ENCODE measurements at regions of chr1 and their contacts with region 1.

Region 1: GRCh38 chr1:22416555-22417454 is 34.8 kb upstream of the ZBTB40 start:
- DNase-seq: peak; percentile 59 to 69
- ATAC-seq: peak in 7 of 8 donors; percentile 46 to 72 (median 51)
- H3K4me3 ChIP-seq: no peak overlapping the region
- H3K27ac ChIP-seq: no peak overlapping the region
- H3K4me1 ChIP-seq: peaks cover 0 to 48% (median 8%) of the 10 kb centered on the region in 9 donors
- H3K27me3 ChIP-seq: peaks cover 0 to 43% (median 18%) of the 10 kb centered on the region in 7 donors
- CTCF ChIP-seq: peak; percentile 43 to 89 (median 79)

Region 2: GRCh38 chr1:22105611-22106207 is 311.1 kb before region 1 on chr1:
- intact Hi-C with region 1: loop called in 9 of 10 experiments (anchors 2 to 10 kb)
- DNase-seq: no peak
- ATAC-seq: peak in 5 of 8 donors; percentile 24 to 41 (median 33)
- H3K4me3 ChIP-seq: no peak overlapping the region
- H3K27ac ChIP-seq: no peak overlapping the region
- H3K4me1 ChIP-seq: peaks cover 0 to 49% (median 20%) of the 10 kb centered on the region in 9 donors
- H3K27me3 ChIP-seq: no peaks in the 10 kb centered on the region
- CTCF ChIP-seq: peak; percentile 64 to 86 (median 75)

Region 3: DNA sequence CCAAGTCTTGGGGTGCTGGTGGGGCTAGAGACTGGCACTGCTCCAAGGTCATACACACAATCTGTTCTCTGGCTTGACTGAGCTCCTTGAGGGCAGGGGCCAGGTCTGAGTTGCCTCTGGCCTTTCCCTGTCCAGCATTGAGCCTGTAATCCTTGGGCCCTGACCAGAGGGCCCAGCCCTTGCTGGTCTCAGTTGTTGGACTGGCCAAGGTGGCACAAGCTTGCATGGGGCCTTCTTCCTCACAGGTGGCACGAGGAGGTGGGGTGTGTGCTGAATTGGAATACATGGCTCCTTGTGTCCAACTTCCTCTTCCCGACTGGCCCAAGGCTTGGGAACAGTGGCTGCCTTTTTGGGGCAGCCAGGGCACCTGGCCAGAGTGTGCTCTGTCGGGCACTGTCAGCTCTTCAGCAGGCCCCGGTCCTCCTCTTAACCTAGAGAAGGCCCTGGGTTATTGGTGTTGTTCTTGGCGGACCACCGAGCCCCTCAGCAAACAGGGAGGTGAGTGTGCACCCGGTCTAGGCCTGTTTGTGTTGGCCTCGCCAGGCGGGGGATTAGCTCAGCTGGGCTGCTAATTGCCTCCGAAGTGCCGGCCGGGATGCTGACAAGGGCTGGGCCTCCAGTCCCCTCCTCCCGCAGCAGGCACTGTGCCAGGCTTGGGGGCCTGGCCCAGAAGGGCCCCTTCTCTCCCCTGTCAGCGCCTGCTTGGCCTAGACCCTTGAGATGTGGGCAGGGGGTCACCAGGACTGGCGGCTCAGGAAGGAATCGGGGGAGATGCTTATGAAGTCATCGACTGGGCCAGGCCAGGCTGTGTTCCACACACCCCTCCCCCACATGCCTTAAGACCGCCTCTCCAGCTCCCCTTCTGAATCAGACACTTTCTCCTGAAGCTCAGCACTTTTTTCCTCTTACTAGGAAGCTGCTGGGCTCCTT is 302.5 kb before region 1 on chr1:
- intact Hi-C with region 1: loop called in 8 of 10 experiments (anchors 5 to 10 kb)
- DNase-seq: peak in 1 of 2 donors; percentile 39
- ATAC-seq: peak in 7 of 8 donors; percentile 17 to 57 (median 39)
- H3K4me3 ChIP-seq: no peak overlapping the region
- H3K27ac ChIP-seq: peak overlapping the region in 4 of 10 donors; percentile 1 to 48 (median 38)
- H3K4me1 ChIP-seq: peaks cover 9 to 73% (median 44%) of the 10 kb centered on the region in 9 donors
- H3K27me3 ChIP-seq: no peaks in the 10 kb centered on the region
- CTCF ChIP-seq: no peak

Region 4: DNA sequence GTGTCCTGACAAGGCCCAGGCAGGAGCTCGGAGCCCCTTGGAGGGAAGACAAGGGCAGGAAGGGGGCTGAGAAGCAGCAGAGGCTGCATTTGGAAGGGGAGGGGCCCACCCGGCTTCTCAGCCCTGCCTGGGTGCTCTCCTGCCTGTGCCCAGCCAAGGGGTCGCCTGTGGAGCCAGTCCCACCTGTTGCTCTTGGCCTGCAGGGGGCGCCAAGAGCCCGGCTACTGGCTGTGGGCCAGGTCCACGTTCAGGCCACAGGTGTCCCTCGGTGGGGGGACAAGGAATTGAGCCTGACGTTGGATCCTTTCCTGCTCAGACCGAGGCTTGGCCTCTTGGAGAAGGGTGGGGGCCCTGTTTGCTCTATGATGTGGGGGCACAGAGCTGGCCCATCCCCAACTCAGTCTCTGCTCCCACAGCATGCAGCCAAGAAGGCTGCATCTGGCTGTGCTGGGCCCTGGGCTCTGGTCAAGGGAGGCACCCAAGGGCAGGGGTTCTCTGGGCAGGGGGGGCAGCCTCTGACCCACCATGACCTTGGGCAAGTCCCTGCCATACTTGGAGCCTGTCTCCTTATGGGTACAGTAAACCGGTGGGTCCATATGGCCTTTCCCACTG is 284.8 kb before region 1 on chr1:
- intact Hi-C with region 1: loop called in 1 of 10 experiments (anchors 10 kb)
- DNase-seq: no peak
- ATAC-seq: peak in 3 of 8 donors; percentile 31 to 36 (median 35)
- H3K4me3 ChIP-seq: no peak overlapping the region
- H3K27ac ChIP-seq: no peak overlapping the region
- H3K4me1 ChIP-seq: peaks cover 0 to 8% (median 4%) of the 10 kb centered on the region in 9 donors
- H3K27me3 ChIP-seq: peaks cover 0 to 37% (median 10%) of the 10 kb centered on the region in 7 donors
- CTCF ChIP-seq: peak; percentile 18 to 79 (median 67)

Region 5: GRCh38 chr1:22484706-22485345 is 68.0 kb after region 1 on chr1:
- intact Hi-C with region 1: no loop called
- DNase-seq: no peak
- ATAC-seq: no peak
- H3K4me3 ChIP-seq: no peak overlapping the region
- H3K27ac ChIP-seq: no peak overlapping the region
- H3K4me1 ChIP-seq: peaks cover 0 to 32% (median 24%) of the 10 kb centered on the region in 9 donors
- H3K27me3 ChIP-seq: no peaks in the 10 kb centered on the region
- CTCF ChIP-seq: no peak

Region 6: DNA sequence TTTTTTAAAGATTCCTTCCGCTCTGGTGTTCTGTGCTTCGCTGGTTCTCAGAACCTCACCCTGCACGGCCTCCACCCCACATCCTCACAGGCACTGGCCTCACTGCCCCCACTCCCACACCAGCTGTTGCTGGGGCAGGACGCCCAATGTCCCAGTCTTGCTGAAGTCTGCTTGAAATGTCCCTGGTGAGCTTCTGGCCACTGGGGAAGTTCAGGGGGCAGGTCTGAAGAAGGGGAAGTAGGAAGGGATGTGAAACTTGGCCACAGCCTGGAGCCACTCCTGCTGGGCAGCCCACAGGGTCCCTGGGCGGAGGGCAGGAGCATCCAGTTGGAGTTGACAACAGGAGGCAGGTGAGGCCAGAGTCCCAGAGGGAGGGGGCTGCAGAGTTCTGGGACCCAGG is 219.5 kb after region 1 on chr1 and contains the start of gene C1QA:
- intact Hi-C with region 1: loop called in 1 of 10 experiments (anchors 2 kb)
- DNase-seq: peak; percentile 56 to 61
- ATAC-seq: peak; percentile 57 to 81 (median 76)
- H3K4me3 ChIP-seq: peak within 1 kb of the TSS in 9 of 10 donors; percentile 0 to 56 (median 34)
- H3K27ac ChIP-seq: peak within 1 kb of the TSS in 1 of 10 donors; percentile 81
- H3K4me1 ChIP-seq: peaks cover 0 to 4% (median 0%) of the 10 kb centered on the region in 9 donors
- H3K27me3 ChIP-seq: peaks cover 0 to 51% (median 15%) of the 10 kb centered on the region in 7 donors
- CTCF ChIP-seq: no peak
- total RNA-seq, gene C1QA: 16.4 to 386 (median 28.9) TPM

Region 7: DNA sequence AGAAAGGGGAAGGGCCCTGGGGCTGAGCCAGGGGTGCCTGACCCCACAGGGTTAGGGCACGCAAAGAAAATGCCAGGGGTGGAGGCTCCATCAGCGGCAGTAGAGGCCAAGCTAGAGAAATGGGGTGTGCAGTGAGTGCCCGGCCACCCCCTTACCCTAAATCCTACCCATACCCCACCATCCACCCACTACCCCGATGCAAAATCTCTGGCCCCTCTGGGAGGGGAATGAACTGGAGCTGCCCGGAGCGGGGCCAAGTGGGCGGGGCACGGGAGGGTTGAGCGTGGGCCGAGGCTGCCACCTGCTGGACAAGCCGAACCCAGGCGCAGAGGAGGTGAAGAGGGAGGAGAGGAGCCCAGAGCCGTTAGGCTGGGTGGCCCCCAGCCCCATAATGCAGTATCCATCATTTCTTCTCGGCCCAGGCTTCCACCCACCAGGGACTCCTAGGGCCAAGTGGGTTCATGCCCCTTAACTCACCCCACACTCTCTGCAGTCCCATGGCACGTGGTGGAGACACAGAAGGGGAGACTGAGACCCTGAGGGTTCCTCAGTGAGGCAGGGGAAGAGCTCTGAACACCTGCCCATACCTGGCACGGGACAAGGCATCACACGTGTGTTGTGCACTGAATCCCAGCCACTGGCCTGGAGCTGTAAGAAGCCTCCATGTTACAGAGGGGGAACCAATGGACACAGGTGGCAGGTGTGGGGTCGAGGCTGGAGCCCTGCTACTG is 225.3 kb after region 1 on chr1:
- intact Hi-C with region 1: loop called (anchors 1 to 2 kb)
- DNase-seq: peak; percentile 81 to 88
- ATAC-seq: peak; percentile 78 to 90 (median 88)
- H3K4me3 ChIP-seq: no peak overlapping the region
- H3K27ac ChIP-seq: peak overlapping the region in 1 of 10 donors; percentile 56
- H3K4me1 ChIP-seq: peaks cover 0 to 13% (median 3%) of the 10 kb centered on the region in 9 donors
- H3K27me3 ChIP-seq: peaks cover 0 to 28% (median 21%) of the 10 kb centered on the region in 7 donors
- CTCF ChIP-seq: peak; percentile 84 to 97 (median 93)

Region 8: DNA sequence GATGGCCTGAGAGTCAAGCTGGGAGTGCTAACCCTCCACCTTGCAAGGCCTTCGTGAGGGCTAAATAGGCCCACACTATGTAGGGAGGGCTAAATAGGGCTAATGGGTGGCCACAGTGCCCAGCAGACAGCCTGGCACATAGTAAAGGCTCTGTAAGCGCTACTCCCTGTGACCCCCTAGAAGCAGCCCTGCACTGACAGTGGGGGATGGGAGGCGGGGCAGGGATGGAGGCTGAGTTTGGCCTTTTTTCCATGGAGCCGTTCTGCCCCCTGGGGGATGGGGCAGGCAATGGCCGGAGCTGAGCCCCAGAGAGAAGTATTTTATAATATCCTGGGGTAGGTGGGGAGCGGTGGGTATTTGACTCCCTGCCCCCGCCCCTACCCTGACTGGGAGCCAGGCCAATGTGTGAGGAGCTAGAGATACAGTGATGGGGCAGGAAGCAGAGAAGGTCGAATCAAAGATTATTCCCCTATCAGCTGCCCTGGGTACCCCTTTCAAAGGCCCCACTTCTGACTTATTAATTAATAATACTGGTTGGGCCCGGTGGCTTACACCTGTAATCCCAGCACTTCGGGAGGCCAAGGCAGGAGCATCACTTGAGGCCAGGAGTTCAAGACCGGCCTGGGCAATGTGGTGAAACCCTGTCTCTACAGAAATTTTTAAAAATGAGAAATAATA is 513.6 kb after region 1 on chr1:
- intact Hi-C with region 1: loop called in 1 of 10 experiments (anchors 5 kb)
- DNase-seq: peak; percentile 25 to 48
- ATAC-seq: peak; percentile 20 to 80 (median 72)
- H3K4me3 ChIP-seq: no peak overlapping the region
- H3K27ac ChIP-seq: no peak overlapping the region
- H3K4me1 ChIP-seq: no peaks in the 10 kb centered on the region
- H3K27me3 ChIP-seq: peaks cover 0 to 40% (median 12%) of the 10 kb centered on the region in 7 donors
- CTCF ChIP-seq: peak in 8 of 9 donors; percentile 61 to 76 (median 70)

Measured in heart right ventricle (tissue), 16 donors.